H1 (cell line): ENCODE measurements at regions of chr11 and their contacts with region 1.

Region 1: DNA sequence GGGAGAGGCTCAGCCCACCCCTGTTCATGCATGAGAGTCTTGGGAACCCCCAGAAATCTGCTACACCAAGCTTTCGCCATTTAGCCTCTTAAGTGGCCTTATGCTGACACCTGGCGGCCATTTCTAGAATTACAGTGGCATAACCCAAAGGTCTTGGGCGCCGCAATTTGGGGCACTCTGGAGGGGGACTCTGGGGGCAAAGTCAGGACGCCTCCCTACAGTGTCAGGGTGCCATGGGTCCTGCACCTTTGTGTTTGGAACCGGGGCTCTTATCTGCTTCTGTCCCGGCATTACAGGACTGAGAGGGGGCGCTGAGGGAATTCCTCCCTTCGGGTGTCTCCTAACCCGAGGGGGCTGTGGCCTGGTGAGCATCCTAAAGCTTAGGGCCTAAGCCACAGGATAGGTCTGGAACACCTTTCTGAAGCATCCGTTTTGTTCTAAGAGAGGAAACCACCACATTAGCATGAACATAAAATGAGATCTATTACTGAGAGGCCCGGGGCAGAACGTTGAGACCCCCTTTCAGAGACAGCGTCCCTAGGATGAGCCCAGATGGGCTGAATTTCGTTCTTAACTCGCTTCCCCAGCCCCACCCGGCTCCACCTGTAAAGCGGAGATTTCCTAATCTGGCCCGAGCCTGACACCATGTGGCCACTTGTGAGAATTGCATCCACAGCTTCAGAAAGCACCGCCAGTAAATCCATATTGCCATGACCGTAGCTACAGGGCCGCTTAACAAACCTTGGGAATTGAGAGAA is 9.3 kb downstream of the INS start:
- DNase-seq: peak in 1 of 2 experiments; percentile 91
- H3K4me3 ChIP-seq: peak overlapping the region in 1 of 4 experiments; percentile 33; a peak in 2 of 8 replicates
- H3K27ac ChIP-seq: no peak overlapping the region
- H3K4me1 ChIP-seq: peaks cover 0 to 3% (median 2%) of the 10 kb centered on the region in 4 experiments; a peak in 4 of 7 replicates
- H3K27me3 ChIP-seq: peaks cover 17 to 35% (median 31%) of the 10 kb centered on the region in 4 experiments
- CTCF ChIP-seq: peak; percentile 66 to 84 (median 84)
- EP300 ChIP-seq: no peak
- POLR2A ChIP-seq: no peak
- RAD21 ChIP-seq: peak; percentile 86 to 87

Region 2: GRCh38 chr11:1652771-1653540 is 498.7 kb before region 1 on chr11:
- CTCF ChIA-PET with region 1: interaction called, 166 read pairs
- POLR2A ChIA-PET with region 1: no interaction called
- DNase-seq: peak in 1 of 2 experiments; percentile 95
- H3K4me3 ChIP-seq: peak overlapping the region in 3 of 4 experiments; percentile 19 to 53 (median 26); a peak in 4 of 8 replicates
- H3K27ac ChIP-seq: no peak overlapping the region
- H3K4me1 ChIP-seq: peaks cover 0 to 6% (median 2%) of the 10 kb centered on the region in 4 experiments; a peak in 3 of 7 replicates
- H3K27me3 ChIP-seq: peaks cover 0 to 9% (median 6%) of the 10 kb centered on the region in 4 experiments; a peak in 4 of 7 replicates
- CTCF ChIP-seq: peak; percentile 76 to 92 (median 88)
- EP300 ChIP-seq: no peak
- POLR2A ChIP-seq: no peak
- RAD21 ChIP-seq: peak; percentile 94 to 97

Region 3: DNA sequence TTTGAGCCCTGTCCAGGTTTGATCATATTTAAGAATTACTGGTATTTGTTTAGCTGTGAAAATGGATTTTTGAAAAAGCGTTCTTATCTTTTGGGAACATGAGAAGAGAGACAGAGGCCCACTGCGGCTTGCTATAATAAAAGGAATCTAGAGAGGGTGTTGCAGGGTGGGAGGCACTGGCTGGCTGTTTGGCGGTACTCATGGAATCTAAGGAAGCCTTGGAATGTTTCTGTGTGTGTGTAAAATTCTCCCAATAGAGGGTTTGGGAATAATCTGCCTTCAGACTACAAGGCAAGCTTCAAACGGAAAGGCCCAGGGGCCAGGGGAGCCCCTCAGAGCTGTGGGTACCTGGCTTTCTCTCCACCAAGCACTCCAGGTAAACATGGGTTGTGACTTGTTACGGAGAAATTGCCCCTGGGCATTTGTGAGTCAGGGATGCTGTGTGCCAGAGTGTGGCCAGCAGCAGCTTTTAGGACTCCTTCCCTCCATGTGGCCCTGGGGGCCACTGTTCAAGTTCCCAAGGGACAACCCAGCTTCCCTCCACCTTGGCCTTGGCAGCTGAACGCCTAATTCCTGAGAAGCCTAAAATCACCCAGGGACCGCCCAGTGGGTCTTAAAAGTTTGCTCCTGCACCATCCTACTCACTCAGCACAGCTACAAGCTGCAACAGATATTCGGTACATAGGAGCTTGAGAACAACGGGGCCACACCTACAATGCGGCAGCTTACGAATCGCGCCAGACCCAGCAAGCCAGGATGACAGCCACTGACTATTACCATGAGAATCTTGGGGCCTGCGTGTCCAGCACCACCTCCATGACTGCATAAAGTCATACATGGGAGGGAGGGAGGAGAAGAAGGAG is 331.0 kb before region 1 on chr11:
- CTCF ChIA-PET with region 1: interaction called, 439 read pairs
- POLR2A ChIA-PET with region 1: no interaction called
- DNase-seq: no peak
- H3K4me3 ChIP-seq: no peak overlapping the region
- H3K27ac ChIP-seq: no peak overlapping the region
- H3K4me1 ChIP-seq: peaks cover 0 to 2% (median 0%) of the 10 kb centered on the region in 4 experiments; a peak in 3 of 7 replicates
- H3K27me3 ChIP-seq: no peaks in the 10 kb centered on the region; a peak in 1 of 7 replicates
- CTCF ChIP-seq: no peak
- EP300 ChIP-seq: no peak
- POLR2A ChIP-seq: no peak
- RAD21 ChIP-seq: no peak

Region 4: DNA sequence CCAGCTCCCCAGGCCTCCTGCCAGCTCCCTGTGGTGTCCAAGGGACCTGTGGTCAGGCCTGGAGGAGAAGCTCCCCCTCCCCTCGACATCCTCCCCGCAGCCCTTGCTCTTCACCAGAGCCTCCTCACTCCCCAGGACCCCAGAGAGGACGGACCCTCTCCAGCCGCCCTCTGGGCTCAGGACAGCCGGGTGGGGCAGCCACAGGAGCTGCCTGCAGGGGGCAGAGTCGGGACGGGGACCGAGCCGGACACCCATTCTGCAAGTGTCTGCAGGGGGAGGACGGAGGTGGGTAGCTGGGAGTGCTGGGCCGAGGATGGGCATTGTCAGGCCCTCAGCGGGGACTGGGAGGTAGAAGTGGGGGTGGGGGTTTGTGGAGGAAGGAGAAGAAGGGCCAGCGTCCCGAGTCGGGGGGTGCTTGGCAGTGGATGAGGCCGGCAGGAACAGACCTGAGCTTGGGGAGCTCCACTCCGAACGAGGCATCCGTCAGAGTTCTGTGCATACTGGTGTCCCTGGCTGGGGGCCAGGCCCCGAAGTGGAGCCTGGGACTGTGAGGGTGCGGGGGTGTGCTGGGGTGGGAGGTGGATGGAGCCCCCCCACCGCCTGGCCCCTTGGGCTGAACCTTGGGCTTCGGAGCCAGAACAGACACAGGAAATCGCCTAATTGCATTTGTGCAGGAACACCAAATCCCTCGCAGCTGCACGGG is 275.2 kb before region 1 on chr11:
- CTCF ChIA-PET with region 1: interaction called, 170 read pairs
- POLR2A ChIA-PET with region 1: interaction called, 5 read pairs
- DNase-seq: peak; percentile 25 to 84
- H3K4me3 ChIP-seq: no peak overlapping the region
- H3K27ac ChIP-seq: no peak overlapping the region
- H3K4me1 ChIP-seq: no peaks in the 10 kb centered on the region; a peak in 1 of 7 replicates
- H3K27me3 ChIP-seq: no peaks in the 10 kb centered on the region
- CTCF ChIP-seq: peak; percentile 73 to 78 (median 75)
- EP300 ChIP-seq: no peak
- POLR2A ChIP-seq: no peak
- RAD21 ChIP-seq: peak; percentile 48 to 63; a peak in 3 of 4 replicates

Region 5: GRCh38 chr11:1917671-1918516 is 233.8 kb before region 1 on chr11:
- CTCF ChIA-PET with region 1: interaction called, 47 read pairs
- POLR2A ChIA-PET with region 1: no interaction called
- DNase-seq: no peak
- H3K4me3 ChIP-seq: no peak overlapping the region
- H3K27ac ChIP-seq: no peak overlapping the region
- H3K4me1 ChIP-seq: peaks cover 0 to 3% (median 3%) of the 10 kb centered on the region in 4 experiments; a peak in 4 of 7 replicates
- H3K27me3 ChIP-seq: no peaks in the 10 kb centered on the region
- CTCF ChIP-seq: peak; percentile 74 to 80 (median 77)
- EP300 ChIP-seq: no peak
- POLR2A ChIP-seq: no peak
- RAD21 ChIP-seq: peak; percentile 52 to 68

Region 6: GRCh38 chr11:1983601-1983961 is 168.1 kb before region 1 on chr11:
- CTCF ChIA-PET with region 1: interaction called, 66 read pairs
- POLR2A ChIA-PET with region 1: no interaction called
- DNase-seq: peak in 1 of 2 experiments; percentile 33
- H3K4me3 ChIP-seq: no peak overlapping the region
- H3K27ac ChIP-seq: no peak overlapping the region
- H3K4me1 ChIP-seq: no peaks in the 10 kb centered on the region
- H3K27me3 ChIP-seq: no peaks in the 10 kb centered on the region
- CTCF ChIP-seq: no peak
- EP300 ChIP-seq: no peak
- POLR2A ChIP-seq: no peak
- RAD21 ChIP-seq: no peak

Region 7: DNA sequence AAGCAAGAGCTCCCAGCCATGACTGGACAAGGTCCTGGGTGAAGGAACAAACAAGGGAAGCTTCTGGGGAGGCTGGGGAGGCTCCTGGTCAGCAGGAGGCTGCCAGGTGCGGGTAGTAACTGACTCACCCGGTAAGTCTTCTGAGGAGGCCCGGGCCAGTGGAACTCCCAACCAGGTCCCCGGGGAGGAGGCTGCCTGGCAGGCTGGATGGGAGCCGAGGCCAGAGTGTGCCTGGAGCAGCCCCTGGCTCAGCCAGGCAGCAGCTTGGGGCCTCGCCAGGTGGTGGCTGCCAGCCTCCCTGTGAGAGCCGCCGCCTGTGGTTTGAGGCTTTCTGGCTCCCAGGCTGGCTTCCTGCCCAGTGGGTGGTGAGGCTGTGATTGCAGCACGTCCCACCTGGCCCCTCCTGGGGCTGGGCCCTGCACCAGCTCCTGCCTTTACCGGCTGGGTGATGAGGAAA is 58.7 kb before region 1 on chr11:
- CTCF ChIA-PET with region 1: interaction called, 80 read pairs
- POLR2A ChIA-PET with region 1: no interaction called
- DNase-seq: no peak
- H3K4me3 ChIP-seq: no peak overlapping the region
- H3K27ac ChIP-seq: no peak overlapping the region
- H3K4me1 ChIP-seq: peaks cover 0 to 15% (median 12%) of the 10 kb centered on the region in 4 experiments; a peak in 6 of 7 replicates
- H3K27me3 ChIP-seq: 0 out of 7 replicates have a peak, but pooled peaks cover 0 to 3% (median 0%) of the 10 kb centered on the region in 4 experiments
- CTCF ChIP-seq: no peak
- EP300 ChIP-seq: no peak
- POLR2A ChIP-seq: no peak
- RAD21 ChIP-seq: no peak

Region 8: GRCh38 chr11:2202055-2202899 is 50.6 kb after region 1 on chr11:
- CTCF ChIA-PET with region 1: no interaction called
- POLR2A ChIA-PET with region 1: no interaction called
- DNase-seq: no peak
- H3K4me3 ChIP-seq: no peak overlapping the region
- H3K27ac ChIP-seq: no peak overlapping the region
- H3K4me1 ChIP-seq: no peaks in the 10 kb centered on the region; a peak in 1 of 7 replicates
- H3K27me3 ChIP-seq: no peaks in the 10 kb centered on the region; a peak in 1 of 7 replicates
- CTCF ChIP-seq: no peak
- EP300 ChIP-seq: no peak
- POLR2A ChIP-seq: no peak
- RAD21 ChIP-seq: no peak

Region 9: DNA sequence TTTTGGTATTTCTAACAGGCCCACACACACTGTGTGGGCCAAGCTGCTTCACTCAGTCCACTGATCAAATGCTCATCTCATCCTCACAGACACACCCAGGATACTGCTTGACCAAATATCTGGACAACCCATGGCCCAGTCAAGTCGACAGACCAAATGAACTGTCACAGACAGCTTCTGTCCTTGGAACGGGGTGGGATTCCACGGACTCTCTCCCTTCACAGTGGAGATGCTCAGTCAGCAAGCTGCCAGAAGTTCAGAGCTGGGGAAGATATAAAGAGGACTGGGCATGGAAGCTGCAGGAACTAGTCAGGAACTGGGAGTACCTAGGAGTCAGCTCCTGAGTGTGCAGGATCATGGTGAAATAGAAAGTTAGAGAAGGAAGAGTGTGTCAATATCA is 190.9 kb after region 1 on chr11:
- CTCF ChIA-PET with region 1: no interaction called
- POLR2A ChIA-PET with region 1: no interaction called
- DNase-seq: no peak
- H3K4me3 ChIP-seq: no peak overlapping the region
- H3K27ac ChIP-seq: no peak overlapping the region
- H3K4me1 ChIP-seq: peaks cover 0 to 2% (median under 1%) of the 10 kb centered on the region in 4 experiments; a peak in 3 of 7 replicates
- H3K27me3 ChIP-seq: no peaks in the 10 kb centered on the region
- CTCF ChIP-seq: no peak
- EP300 ChIP-seq: no peak
- POLR2A ChIP-seq: no peak
- RAD21 ChIP-seq: no peak